ENCODE measurements at regions of chr6 and their contacts with region 1.

Region 1: GRCh38 chr6:110826236-110827129 is 11.2 kb upstream of the CDK19 start:
- DNase-seq: peak; percentile 36 to 38
- H3K4me3 ChIP-seq: no peak overlapping the region
- H3K4me3 Mint-ChIP-seq: no peak overlapping the region
- H3K27ac Mint-ChIP-seq: peak overlapping the region; percentile 42
- H3K4me1 ChIP-seq: peaks cover 27% of the 10 kb centered on the region
- H3K4me1 Mint-ChIP-seq: peaks cover 16% of the 10 kb centered on the region
- H3K27me3 ChIP-seq: no peaks in the 10 kb centered on the region
- H3K27me3 Mint-ChIP-seq: no peaks in the 10 kb centered on the region
- CTCF ChIP-seq: no peak

Region 2: GRCh38 chr6:110656492-110656891 is 170.0 kb before region 1 on chr6:
- CTCF ChIA-PET with region 1: no interaction called
- POLR2A ChIA-PET with region 1: no interaction called
- intact Hi-C with region 1: no loop called
- DNase-seq: no peak
- H3K4me3 ChIP-seq: no peak overlapping the region
- H3K4me3 Mint-ChIP-seq: no peak overlapping the region
- H3K27ac Mint-ChIP-seq: no peak overlapping the region
- H3K4me1 ChIP-seq: peaks cover 13% of the 10 kb centered on the region; the same call in 1 of the 2 replicates
- H3K4me1 Mint-ChIP-seq: peaks cover 16% of the 10 kb centered on the region
- H3K27me3 ChIP-seq: no peaks in the 10 kb centered on the region
- H3K27me3 Mint-ChIP-seq: no peaks in the 10 kb centered on the region
- CTCF ChIP-seq: no peak

Region 3: DNA sequence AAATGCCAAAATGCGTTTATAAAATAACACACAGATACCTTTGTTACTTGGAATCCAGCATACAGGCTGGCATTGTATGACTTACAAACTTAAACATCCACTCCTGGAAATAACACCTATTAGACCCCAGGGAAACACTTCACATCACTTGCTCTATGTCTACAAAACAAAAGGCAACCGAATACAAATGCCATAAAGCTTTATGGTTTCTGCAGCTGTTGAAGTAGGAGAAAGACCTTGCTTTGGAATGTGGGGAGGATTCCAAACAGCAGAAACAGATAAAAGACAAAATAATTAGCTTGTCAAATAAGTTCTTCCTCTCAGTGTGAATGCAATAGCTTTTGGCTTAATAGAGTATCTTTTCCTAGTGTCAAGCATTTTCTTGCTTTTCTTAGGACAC is 38.3 kb after region 1 on chr6:
- CTCF ChIA-PET with region 1: no interaction called
- POLR2A ChIA-PET with region 1: no interaction called
- intact Hi-C with region 1: loop called (anchors 2 kb)
- DNase-seq: peak in 1 of 2 experiments; percentile 10
- H3K4me3 ChIP-seq: no peak overlapping the region
- H3K4me3 Mint-ChIP-seq: no peak overlapping the region
- H3K27ac Mint-ChIP-seq: no peak overlapping the region
- H3K4me1 ChIP-seq: peaks cover 13% of the 10 kb centered on the region
- H3K4me1 Mint-ChIP-seq: no peaks in the 10 kb centered on the region
- H3K27me3 ChIP-seq: no peaks in the 10 kb centered on the region
- H3K27me3 Mint-ChIP-seq: no peaks in the 10 kb centered on the region
- CTCF ChIP-seq: no peak

Region 4: DNA sequence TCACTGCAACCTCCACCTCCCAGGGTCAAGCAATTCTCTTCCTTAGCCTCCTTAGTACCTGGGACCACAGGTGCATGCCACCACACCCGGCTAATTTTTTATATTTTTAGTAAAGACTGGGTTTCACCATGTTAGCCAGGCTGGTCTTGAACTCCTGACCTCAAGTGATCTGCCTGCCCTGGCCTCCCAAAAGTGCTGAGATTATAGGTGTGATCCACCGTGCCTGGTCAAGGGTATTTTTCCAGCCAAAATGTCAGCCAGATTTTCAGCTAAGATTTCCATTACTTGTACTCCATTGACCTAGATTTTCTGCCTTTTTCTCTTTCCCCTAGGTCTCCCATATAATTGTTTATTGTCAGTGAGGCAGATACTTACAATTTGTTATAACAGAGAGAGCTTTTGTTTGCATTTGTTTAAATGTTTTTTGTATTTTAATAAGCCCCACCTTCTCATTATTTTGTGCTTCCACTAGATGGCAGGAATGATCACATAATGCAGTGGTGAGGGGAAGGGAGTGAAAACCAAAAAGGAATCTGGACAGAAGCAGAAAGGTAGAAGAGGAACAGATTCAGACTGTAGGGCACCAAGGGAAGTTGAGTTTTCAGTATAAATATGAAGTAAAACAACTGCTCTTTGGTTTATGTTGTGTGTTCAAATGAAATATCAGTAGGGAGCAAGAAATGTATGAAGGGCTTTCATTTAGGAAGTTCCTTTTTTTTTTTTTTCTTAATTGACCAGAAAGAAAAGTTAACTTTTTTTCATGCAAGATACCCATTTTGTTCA is 185.1 kb after region 1 on chr6:
- CTCF ChIA-PET with region 1: no interaction called
- POLR2A ChIA-PET with region 1: no interaction called
- intact Hi-C with region 1: no loop called
- DNase-seq: peak in 1 of 2 experiments; percentile 43
- H3K4me3 ChIP-seq: no peak overlapping the region
- H3K4me3 Mint-ChIP-seq: no peak overlapping the region
- H3K27ac Mint-ChIP-seq: no peak overlapping the region
- H3K4me1 ChIP-seq: no peaks in the 10 kb centered on the region
- H3K4me1 Mint-ChIP-seq: no peaks in the 10 kb centered on the region
- H3K27me3 ChIP-seq: no peaks in the 10 kb centered on the region
- H3K27me3 Mint-ChIP-seq: no peaks in the 10 kb centered on the region
- CTCF ChIP-seq: peak; percentile 62 to 67

Measured in Caco-2 (cell line).